ENCODE measurements at regions of chr1 and their contacts with region 1.

Region 1: GRCh38 chr1:218330043-218330623 is 15.0 kb upstream of the TGFB2 start:
- DNase-seq: peak; percentile 61
- ATAC-seq: peak; percentile 45
- H3K4me3 ChIP-seq: no peak overlapping the region
- H3K4me3 Mint-ChIP-seq: no peak overlapping the region
- H3K27ac ChIP-seq: no peak overlapping the region
- H3K27ac Mint-ChIP-seq: no peak overlapping the region
- H3K4me1 ChIP-seq: no peaks in the 10 kb centered on the region
- H3K4me1 Mint-ChIP-seq: no peaks in the 10 kb centered on the region
- H3K27me3 ChIP-seq: no peaks in the 10 kb centered on the region
- H3K27me3 Mint-ChIP-seq: no peaks in the 10 kb centered on the region
- CTCF ChIP-seq: peak; percentile 90

Region 2: GRCh38 chr1:218351391-218352074 is 21.4 kb after region 1 on chr1:
- CTCF ChIA-PET with region 1: interaction called, 7 read pairs
- POLR2A ChIA-PET with region 1: no interaction called
- intact Hi-C with region 1: loop called (anchors 2 kb)
- DNase-seq: peak; percentile 74
- ATAC-seq: peak; percentile 75
- H3K4me3 ChIP-seq: peak overlapping the region; percentile 30 to 65 (median 48)
- H3K4me3 Mint-ChIP-seq: peak overlapping the region; percentile 75
- H3K27ac ChIP-seq: peak overlapping the region; percentile 62 to 75
- H3K27ac Mint-ChIP-seq: peak overlapping the region; percentile 70
- H3K4me1 ChIP-seq: peaks cover 31 to 33% of the 10 kb centered on the region in 2 donors
- H3K4me1 Mint-ChIP-seq: peaks cover 48% of the 10 kb centered on the region
- H3K27me3 ChIP-seq: no peaks in the 10 kb centered on the region
- H3K27me3 Mint-ChIP-seq: no peaks in the 10 kb centered on the region
- CTCF ChIP-seq: peak; percentile 74

Region 3: DNA sequence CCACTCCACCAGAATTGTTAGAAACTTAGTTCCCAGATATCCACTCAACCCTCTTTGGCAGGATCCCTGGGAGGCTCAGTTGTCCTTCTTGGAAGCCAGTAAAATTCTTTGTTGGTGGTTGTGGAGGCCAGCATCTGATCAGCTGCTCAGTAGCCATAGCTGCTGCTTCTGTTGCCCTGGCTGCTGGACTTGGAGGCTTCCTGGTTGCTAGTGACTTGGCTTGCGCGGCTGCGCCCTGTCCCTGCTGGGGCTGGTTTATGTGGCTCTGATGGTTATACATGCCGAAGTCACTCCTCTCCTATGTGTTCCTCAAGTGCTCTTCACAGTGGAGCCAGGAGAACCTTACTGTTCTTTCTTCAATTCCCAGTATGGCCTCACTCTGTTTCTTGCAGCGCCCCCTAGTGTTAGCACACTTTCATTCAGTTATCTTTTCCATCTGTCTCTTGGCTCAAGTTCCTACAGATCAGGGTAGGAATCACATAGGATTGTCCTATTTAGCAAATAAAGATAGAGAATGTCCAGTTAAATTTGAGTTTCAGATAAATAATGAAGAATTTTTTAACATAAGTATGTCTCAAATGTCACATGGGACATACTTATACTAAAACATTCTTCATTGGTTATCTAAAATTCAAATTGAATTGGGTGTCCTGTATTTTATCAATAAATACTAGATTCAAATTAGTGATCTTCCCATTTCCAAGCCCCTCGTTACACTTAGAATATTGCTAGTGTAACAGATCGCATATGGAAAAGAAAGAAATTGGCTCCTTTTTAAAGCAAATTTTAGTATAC is 191.4 kb after region 1 on chr1:
- CTCF ChIA-PET with region 1: interaction called, 42 read pairs
- POLR2A ChIA-PET with region 1: no interaction called
- intact Hi-C with region 1: loop called (anchors 1 kb)
- DNase-seq: peak; percentile 61
- ATAC-seq: no peak
- H3K4me3 ChIP-seq: no peak overlapping the region
- H3K4me3 Mint-ChIP-seq: no peak overlapping the region
- H3K27ac ChIP-seq: no peak overlapping the region
- H3K27ac Mint-ChIP-seq: no peak overlapping the region
- H3K4me1 ChIP-seq: peaks cover 0 to 2% of the 10 kb centered on the region in 2 donors
- H3K4me1 Mint-ChIP-seq: no peaks in the 10 kb centered on the region
- H3K27me3 ChIP-seq: peaks cover 0 to 9% (median 0%) of the 10 kb centered on the region in 4 experiments
- H3K27me3 Mint-ChIP-seq: peaks cover 18% of the 10 kb centered on the region
- CTCF ChIP-seq: peak; percentile 78

Region 4: DNA sequence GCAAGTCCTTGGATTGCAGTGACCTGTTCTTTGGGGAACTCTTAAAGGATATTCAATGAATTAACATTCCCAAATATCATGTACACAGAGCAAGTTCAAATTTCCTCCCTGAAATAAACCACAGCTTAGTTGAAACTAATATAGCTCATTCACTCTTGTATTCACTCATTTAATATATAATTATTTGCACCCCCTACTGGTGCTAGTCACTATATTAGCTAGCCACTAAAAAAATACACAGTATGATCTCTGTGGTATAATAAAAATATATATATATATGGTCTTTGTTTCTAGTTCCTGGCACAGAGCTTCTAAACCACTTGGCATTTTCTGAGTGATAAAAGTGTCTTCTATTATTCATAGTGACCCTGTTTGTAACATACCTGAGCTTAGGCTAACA is 666.2 kb after region 1 on chr1:
- CTCF ChIA-PET with region 1: interaction called, 4 read pairs
- POLR2A ChIA-PET with region 1: no interaction called
- intact Hi-C with region 1: loop called (anchors 5 kb)
- DNase-seq: no peak
- ATAC-seq: no peak
- H3K4me3 ChIP-seq: no peak overlapping the region
- H3K4me3 Mint-ChIP-seq: no peak overlapping the region
- H3K27ac ChIP-seq: no peak overlapping the region
- H3K27ac Mint-ChIP-seq: no peak overlapping the region
- H3K4me1 ChIP-seq: no peaks in the 10 kb centered on the region
- H3K4me1 Mint-ChIP-seq: no peaks in the 10 kb centered on the region
- H3K27me3 ChIP-seq: no peaks in the 10 kb centered on the region
- H3K27me3 Mint-ChIP-seq: no peaks in the 10 kb centered on the region
- CTCF ChIP-seq: no peak

Region 5: DNA sequence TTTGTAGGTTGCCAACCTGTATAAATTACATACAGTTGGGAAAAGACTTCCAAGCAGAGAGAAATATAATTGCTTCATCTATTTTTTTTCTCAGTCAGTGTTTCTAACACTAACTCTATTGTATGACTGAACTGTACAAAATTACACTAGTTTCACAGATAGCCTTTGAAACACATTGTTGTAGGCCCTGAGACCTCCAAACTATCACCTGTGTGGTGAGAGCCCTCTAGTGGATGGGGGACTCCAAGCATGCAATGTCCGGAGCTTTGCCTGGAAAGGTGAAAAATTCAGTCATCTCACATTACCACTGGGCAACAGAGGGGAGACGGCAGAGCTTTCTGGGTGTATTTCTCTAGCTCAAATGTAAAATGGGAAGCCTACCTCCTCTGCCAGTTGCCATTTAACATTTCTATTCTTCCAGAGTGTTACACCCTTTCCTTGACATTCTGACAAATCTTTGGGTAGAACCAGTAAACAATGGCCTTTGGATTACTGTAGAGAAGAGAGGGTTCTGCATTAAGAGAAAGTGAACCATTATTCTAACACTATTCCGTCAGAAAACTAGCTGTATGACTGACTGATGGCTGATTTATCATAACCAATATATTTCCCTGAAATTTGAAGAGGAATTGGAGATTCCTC is 1055.8 kb after region 1 on chr1:
- CTCF ChIA-PET with region 1: interaction called, 18 read pairs
- POLR2A ChIA-PET with region 1: no interaction called
- intact Hi-C with region 1: loop called (anchors 1 kb)
- DNase-seq: peak; percentile 50
- ATAC-seq: peak; percentile 61
- H3K4me3 ChIP-seq: no peak overlapping the region
- H3K4me3 Mint-ChIP-seq: no peak overlapping the region
- H3K27ac ChIP-seq: no peak overlapping the region
- H3K27ac Mint-ChIP-seq: no peak overlapping the region
- H3K4me1 ChIP-seq: no peaks in the 10 kb centered on the region
- H3K4me1 Mint-ChIP-seq: no peaks in the 10 kb centered on the region
- H3K27me3 ChIP-seq: no peaks in the 10 kb centered on the region
- H3K27me3 Mint-ChIP-seq: no peaks in the 10 kb centered on the region
- CTCF ChIP-seq: peak; percentile 76

Region 6: DNA sequence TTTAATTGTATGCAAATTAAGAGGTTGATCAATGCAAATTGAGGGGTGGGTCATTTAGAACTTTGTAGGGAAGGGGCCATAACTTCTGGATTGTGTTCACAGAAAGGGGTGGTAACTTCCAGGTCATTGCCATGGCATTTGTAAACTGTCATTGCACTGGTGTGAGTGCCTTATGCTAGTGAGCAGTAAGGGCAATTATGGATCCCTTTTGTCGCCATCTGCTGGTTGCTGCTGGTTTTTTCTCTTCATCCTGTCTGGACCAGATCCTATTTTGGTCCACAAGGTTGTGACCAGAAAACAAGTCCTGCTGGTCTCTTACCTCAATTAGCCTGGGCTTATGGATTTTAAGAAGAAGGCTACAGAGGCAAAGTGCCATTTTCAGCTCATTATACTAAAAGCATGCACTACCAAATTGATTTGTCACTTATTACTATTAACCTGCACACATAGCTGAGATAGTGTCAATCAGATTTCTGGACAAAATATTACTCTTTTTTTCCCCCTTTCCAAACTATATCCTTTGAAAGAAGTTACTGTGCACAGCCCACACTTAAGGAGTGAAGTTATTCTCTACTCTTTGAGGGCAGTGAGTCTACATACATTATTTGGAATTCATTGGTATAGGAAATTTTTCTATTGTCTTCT is 1086.6 kb after region 1 on chr1:
- CTCF ChIA-PET with region 1: interaction called, 28 read pairs
- POLR2A ChIA-PET with region 1: no interaction called
- intact Hi-C with region 1: loop called (anchors 1 kb)
- DNase-seq: peak; percentile 60
- ATAC-seq: peak; percentile 57
- H3K4me3 ChIP-seq: no peak overlapping the region
- H3K4me3 Mint-ChIP-seq: no peak overlapping the region
- H3K27ac ChIP-seq: no peak overlapping the region
- H3K27ac Mint-ChIP-seq: no peak overlapping the region
- H3K4me1 ChIP-seq: no peaks in the 10 kb centered on the region
- H3K4me1 Mint-ChIP-seq: no peaks in the 10 kb centered on the region
- H3K27me3 ChIP-seq: no peaks in the 10 kb centered on the region
- H3K27me3 Mint-ChIP-seq: no peaks in the 10 kb centered on the region
- CTCF ChIP-seq: peak; percentile 83

Region 7: DNA sequence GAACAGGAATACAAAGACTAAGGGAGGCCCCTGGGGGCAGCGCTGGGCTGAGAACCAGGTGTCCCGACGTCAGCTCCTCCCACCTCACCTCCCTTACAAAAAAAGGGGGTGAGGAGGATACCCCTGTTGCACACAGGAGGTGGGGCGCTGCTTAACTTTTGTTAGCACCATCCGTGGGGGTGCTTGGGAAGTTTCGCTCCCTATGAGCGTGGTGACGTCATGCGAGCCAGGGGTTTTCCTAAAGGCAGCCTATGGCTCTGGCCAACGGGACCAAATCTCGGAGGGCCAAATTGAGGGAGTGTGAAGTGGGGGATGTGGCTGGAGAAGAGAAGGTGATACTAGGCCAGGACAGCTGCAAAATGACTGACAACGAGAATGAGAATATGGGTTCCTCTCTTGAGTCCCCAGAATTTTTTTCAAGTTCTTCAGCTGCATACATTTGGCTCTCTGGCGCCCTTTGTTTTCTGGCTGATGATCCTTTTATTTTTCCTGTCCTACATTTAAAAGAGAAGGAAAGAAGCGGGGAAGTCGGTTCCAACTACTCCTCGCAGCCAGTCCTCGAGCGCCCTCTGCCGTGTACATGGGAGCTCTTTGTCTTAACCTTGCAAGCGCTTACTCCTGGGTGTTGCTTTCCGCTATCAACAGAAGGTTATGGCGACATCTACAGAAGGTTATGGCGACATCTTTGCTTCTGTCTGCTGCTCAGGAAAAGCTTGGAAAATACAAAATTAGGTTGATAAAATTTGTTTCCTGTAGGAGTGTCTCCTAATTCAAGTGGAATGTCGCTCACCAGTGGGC is 1330.7 kb after region 1 on chr1:
- CTCF ChIA-PET with region 1: no interaction called
- POLR2A ChIA-PET with region 1: no interaction called
- intact Hi-C with region 1: loop called (anchors 5 kb)
- DNase-seq: peak; percentile 22
- ATAC-seq: no peak
- H3K4me3 ChIP-seq: no peak overlapping the region
- H3K4me3 Mint-ChIP-seq: peak overlapping the region; percentile 77
- H3K27ac ChIP-seq: no peak overlapping the region
- H3K27ac Mint-ChIP-seq: no peak overlapping the region
- H3K4me1 ChIP-seq: peaks cover 0 to 6% of the 10 kb centered on the region in 2 donors
- H3K4me1 Mint-ChIP-seq: peaks cover 12% of the 10 kb centered on the region
- H3K27me3 ChIP-seq: peaks cover 0 to 11% (median 4%) of the 10 kb centered on the region in 4 experiments
- H3K27me3 Mint-ChIP-seq: peaks cover 43% of the 10 kb centered on the region
- CTCF ChIP-seq: peak; percentile 31

Measured in B cell (primary cell).